Gastrocnemius medialis (tissue), 4 donors: ENCODE measurements at regions of chr12 and their contacts with region 1.

Region 1: DNA sequence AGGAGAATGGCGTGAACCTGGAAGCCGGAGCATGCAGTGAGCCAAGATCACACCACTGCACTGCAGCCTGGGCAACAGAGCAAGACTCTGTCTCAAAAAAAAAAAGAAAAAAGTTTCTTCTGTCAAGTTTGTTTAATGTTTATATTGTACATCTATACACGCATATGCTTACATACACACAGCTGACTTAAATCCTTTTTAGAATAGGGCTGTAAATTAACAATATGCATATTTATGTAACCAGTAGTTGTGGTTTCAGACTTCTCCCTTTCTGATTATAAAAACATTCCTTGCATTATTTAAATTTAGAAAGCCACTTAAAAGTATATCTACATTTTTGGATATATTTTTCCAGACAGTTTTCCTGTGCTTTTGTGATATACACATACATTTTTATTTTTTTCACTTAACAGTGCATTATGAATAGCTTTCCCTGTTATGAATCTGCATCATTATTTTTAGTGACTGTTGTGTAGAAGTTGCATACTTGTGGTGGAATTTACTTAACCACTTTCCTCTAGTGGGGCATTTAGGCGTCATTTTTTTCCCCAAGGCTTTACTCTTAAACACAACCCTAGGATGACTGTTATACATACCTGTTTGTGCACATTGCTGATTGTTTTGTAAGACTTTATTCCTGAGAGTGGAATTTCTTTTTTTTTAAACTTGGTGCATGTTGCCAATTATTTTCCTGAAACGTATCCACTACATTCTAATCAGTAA is 29.4 kb downstream of the POLR3B start:
- DNase-seq: no peak
- ATAC-seq: no peak
- H3K4me3 ChIP-seq: no peak overlapping the region
- H3K27ac ChIP-seq: no peak overlapping the region
- H3K4me1 ChIP-seq: no peaks in the 10 kb centered on the region
- H3K27me3 ChIP-seq: no peaks in the 10 kb centered on the region
- CTCF ChIP-seq: no peak
- POLR2A ChIP-seq: no peak

Region 2: DNA sequence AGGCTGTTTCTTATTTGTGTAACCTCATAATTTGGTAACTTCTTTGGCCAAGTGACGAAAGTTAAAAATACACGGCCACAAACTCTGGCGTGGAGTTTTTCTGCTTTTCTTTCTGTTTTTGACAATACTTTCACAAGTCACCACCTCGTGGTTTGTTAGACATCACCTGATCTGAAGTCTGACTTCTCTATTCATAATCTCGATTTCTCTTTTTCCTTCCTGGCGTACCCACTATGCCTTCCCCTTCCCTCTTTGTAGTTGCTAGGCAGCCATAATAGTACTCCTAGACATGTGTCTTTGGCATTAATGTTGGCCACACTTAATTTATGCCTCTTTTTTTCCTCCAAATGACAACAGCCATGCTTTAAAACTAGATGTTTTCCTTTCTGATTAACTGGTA is 68.1 kb after region 1 on chr12:
- in situ Hi-C with region 1: no loop called
- intact Hi-C with region 1: no loop called
- DNase-seq: no peak
- ATAC-seq: no peak
- H3K4me3 ChIP-seq: no peak overlapping the region
- H3K27ac ChIP-seq: peak overlapping the region in 1 of 4 donors; percentile 5
- H3K4me1 ChIP-seq: peaks cover 0 to 10% of the 10 kb centered on the region in 2 donors
- H3K27me3 ChIP-seq: no peaks in the 10 kb centered on the region
- CTCF ChIP-seq: no peak
- POLR2A ChIP-seq: no peak

Region 3: DNA sequence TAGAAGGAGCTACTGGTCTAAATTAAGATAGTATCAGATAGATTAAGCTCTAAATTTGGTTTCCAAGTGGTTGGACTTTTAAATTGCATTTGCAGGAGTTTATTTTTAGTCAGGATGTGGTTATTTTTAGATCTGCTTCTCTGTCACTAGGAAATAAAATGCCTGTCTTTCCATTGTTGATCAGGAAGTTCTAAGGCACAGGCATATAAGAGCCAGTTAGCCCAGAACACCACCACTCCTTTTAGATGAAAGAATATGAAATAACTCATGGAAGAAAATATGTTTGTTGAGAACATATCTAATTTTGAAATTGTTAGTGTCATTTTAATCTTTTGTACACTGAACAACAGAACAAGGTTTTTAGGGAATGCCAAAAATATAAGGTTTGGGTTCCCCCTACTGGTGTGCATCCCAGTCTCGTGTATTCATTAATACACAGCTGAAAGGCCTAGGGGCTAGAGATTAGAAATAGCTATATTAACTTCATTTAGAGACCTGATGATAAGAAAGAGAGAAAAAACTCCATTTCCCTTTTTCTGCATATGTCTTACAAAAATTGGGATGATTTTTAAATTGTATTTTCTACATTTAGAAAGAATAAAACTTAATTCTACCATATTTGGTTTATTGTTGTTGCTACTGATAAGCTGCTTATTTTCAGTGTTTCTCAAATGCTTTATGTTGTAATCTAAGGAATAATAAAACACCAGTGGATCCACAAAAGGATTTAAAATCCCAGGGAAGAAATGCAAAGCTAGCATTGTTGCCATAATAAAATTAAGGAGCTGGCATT is 454.7 kb after region 1 on chr12:
- in situ Hi-C with region 1: loop called in 1 of 4 experiments (anchors 25 kb)
- intact Hi-C with region 1: loop called (anchors 10 kb)
- DNase-seq: peak in 1 of 2 donors; percentile 4
- ATAC-seq: peak; percentile 56 to 63
- H3K4me3 ChIP-seq: no peak overlapping the region
- H3K27ac ChIP-seq: peak overlapping the region in 3 of 4 donors; percentile 31 to 52 (median 36)
- H3K4me1 ChIP-seq: peaks cover 28 to 32% of the 10 kb centered on the region in 2 donors
- H3K27me3 ChIP-seq: no peaks in the 10 kb centered on the region
- CTCF ChIP-seq: peak in 3 of 5 experiments; percentile 32 to 57 (median 55)
- POLR2A ChIP-seq: no peak

Region 4: DNA sequence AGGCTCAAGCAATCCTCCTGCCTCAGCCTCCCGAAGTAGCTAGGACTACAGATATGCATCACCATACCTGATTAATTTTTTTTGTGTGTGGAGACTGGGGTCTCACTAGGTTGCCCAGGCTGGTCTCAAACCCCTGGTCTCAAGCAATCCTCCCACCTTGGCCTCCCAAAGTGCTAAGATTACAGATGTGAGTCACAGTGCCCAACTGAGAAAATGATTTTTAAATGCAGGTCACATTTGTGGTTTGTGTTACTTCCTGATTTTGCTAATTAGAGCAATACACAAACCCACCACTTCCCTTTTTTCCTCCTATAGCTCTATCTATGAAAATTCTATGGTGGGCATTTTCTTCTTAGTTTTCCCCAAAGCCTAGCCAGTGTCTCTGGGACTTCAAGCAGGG is 523.2 kb after region 1 on chr12:
- in situ Hi-C with region 1: loop called (anchors 5 to 10 kb)
- intact Hi-C with region 1: no loop called
- DNase-seq: no peak
- ATAC-seq: no peak
- H3K4me3 ChIP-seq: no peak overlapping the region
- H3K27ac ChIP-seq: no peak overlapping the region
- H3K4me1 ChIP-seq: no peaks in the 10 kb centered on the region
- H3K27me3 ChIP-seq: no peaks in the 10 kb centered on the region
- CTCF ChIP-seq: no peak
- POLR2A ChIP-seq: no peak

Region 5: DNA sequence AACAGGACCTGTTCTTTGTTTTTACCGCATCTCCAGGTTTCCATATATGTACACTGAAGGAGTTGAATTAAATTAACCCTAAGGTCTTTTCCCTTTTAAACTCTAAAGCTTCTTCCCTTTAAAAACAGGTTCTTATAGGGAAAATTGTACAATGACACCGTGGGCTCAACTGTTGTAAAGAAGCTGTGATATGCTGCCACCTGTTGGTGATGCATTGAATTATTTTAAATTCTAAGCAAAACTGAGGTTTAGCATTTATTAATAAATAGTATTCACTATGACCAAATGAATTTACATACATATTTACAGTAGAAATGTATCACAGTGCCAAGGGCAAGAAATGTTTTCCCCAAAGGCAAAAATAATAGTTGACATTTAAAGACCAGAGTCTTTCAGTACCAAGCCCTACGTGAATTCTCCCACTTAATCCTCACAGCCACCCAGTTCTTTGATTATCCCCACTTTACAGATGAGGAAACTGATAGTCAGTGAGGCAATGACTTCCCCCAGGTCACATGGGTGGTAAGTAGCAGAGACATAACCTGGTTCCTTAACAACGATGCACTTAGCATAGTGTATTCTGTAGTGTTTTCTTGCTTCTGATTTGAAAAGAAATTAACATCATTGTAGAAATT is 533.1 kb after region 1 on chr12:
- in situ Hi-C with region 1: loop called in 3 of 4 experiments (anchors 5 to 10 kb)
- intact Hi-C with region 1: loop called (anchors 2 kb)
- DNase-seq: no peak
- ATAC-seq: no peak
- H3K4me3 ChIP-seq: no peak overlapping the region
- H3K27ac ChIP-seq: no peak overlapping the region
- H3K4me1 ChIP-seq: no peaks in the 10 kb centered on the region
- H3K27me3 ChIP-seq: no peaks in the 10 kb centered on the region
- CTCF ChIP-seq: peak; percentile 65 to 82 (median 80)
- POLR2A ChIP-seq: no peak

Region 6: GRCh38 chr12:107109741-107110719 is 723.1 kb after region 1 on chr12:
- in situ Hi-C with region 1: loop called (anchors 10 to 25 kb)
- intact Hi-C with region 1: loop called (anchors 2 kb)
- DNase-seq: no peak
- ATAC-seq: no peak
- H3K4me3 ChIP-seq: no peak overlapping the region
- H3K27ac ChIP-seq: no peak overlapping the region
- H3K4me1 ChIP-seq: no peaks in the 10 kb centered on the region
- H3K27me3 ChIP-seq: no peaks in the 10 kb centered on the region
- CTCF ChIP-seq: no peak
- POLR2A ChIP-seq: no peak